IMR-90 (cell line): ENCODE measurements at regions of chr6 and their contacts with region 1.

Region 1: DNA sequence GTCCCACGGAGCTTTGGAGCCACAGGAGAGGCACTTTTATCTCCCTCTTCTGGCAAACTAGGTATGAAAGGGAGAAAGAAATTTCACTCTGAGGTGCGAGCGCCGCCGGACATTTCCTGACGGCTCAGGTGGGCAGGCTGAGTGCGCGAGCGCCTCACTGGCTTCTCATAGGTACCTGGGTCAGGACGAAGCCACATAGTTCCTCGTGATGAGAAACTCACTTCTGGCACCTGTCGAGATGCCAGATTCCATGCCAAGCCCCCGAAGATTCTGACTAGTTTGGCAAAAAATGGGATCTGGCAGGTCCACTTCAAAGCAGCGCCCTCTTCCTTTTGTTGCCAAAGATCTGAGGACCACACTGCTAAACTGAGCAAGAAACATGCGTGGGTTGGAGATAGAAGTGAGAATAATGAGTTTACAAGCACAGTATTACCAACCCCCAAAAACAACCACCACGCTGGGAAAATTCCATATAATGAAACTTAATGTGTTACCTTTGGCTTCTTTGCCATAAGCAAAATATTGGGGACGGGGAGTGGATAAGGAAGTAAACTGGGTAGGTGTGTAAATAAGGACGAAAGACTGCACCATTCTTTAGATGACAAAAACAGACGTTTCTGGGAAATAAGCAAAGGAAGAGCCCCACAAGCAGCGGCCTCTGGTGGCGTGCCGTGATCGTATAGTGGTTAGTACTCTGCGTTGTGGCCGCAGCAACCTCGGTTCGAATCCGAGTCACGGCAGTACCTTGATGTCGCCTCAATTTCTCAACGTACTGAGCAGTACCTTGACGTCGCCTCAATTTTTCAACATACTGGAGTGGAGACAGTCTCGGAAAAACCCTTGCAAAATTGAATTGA is 89.8 kb upstream of the PRSS16 start:
- DNase-seq: peak; percentile 77
- ATAC-seq: peak; percentile 86
- H3K4me3 ChIP-seq: peak overlapping the region; percentile 49
- H3K27ac ChIP-seq: no peak overlapping the region
- H3K4me1 ChIP-seq: no peaks in the 10 kb centered on the region
- H3K27me3 ChIP-seq: no peaks in the 10 kb centered on the region
- CTCF ChIP-seq: peak; percentile 50
- POLR2A ChIP-seq: no peak
- RAD21 ChIP-seq: peak; percentile 38

Region 2: GRCh38 chr6:26607434-26608230 is 550.1 kb before region 1 on chr6:
- CTCF ChIA-PET with region 1: no interaction called
- POLR2A ChIA-PET with region 1: no interaction called
- dilution Hi-C with region 1: no loop called
- in situ Hi-C with region 1: no loop called
- intact Hi-C with region 1: loop called (anchors 2 kb)
- DNase-seq: peak; percentile 58
- ATAC-seq: peak; percentile 99
- H3K4me3 ChIP-seq: peak overlapping the region; percentile 44
- H3K27ac ChIP-seq: no peak overlapping the region
- H3K4me1 ChIP-seq: no peaks in the 10 kb centered on the region
- H3K27me3 ChIP-seq: peaks cover 17% of the 10 kb centered on the region
- CTCF ChIP-seq: peak; percentile 85
- POLR2A ChIP-seq: no peak
- RAD21 ChIP-seq: peak; percentile 83

Region 3: DNA sequence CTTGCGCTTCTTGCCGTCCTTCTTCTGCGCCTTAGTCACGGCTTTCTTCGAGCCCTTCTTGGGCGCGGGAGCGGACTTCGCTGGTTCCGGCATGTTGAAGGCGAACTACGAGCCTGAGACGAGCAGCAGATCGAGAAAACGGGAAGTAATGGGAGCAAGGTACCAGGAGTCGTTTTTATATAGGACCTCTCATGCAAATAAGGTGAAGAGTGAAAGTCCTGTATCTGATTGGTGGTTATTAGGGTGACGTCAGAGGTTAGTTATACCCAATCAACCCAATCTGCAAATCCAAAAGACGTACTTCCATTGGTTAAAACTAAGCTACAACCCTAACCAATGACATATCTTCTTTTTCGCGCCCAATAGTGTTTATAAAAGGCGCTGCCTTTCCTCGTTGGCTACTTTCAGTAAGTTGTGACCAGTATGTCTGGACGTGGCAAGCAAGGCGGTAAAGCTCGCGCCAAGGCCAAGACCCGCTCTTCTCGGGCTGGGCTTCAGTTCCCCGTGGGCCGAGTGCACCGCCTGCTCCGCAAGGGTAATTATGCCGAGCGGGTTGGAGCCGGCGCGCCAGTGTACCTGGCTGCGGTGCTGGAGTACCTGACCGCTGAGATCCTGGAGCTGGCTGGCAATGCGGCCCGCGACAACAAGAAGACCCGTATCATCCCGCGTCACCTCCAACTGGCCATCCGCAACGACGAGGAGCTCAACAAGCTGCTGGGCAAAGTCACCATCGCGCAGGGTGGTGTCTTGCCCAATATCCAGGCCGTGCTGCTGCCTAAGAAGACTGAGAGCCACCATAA is 10.8 kb before region 1 on chr6:
- CTCF ChIA-PET with region 1: interaction called, 3 read pairs
- POLR2A ChIA-PET with region 1: interaction called, 13 read pairs
- dilution Hi-C with region 1: no loop called
- in situ Hi-C with region 1: no loop called
- intact Hi-C with region 1: no loop called
- DNase-seq: peak; percentile 100
- ATAC-seq: peak; percentile 90
- H3K4me3 ChIP-seq: peak overlapping the region; percentile 85
- H3K27ac ChIP-seq: peak overlapping the region; percentile 96
- H3K4me1 ChIP-seq: peaks cover 2% of the 10 kb centered on the region; the same call in 1 of the 2 replicates
- H3K27me3 ChIP-seq: no peaks in the 10 kb centered on the region
- CTCF ChIP-seq: no peak
- POLR2A ChIP-seq: peak; percentile 95
- RAD21 ChIP-seq: no peak

Region 4: GRCh38 chr6:27237089-27237803 is 79.6 kb after region 1 on chr6:
- CTCF ChIA-PET with region 1: no interaction called
- POLR2A ChIA-PET with region 1: no interaction called
- dilution Hi-C with region 1: no loop called
- in situ Hi-C with region 1: no loop called
- intact Hi-C with region 1: loop called (anchors 2 kb)
- DNase-seq: peak; percentile 77
- ATAC-seq: peak; percentile 90
- H3K4me3 ChIP-seq: peak overlapping the region; percentile 60; the same call in 1 of the 2 replicates
- H3K27ac ChIP-seq: no peak overlapping the region
- H3K4me1 ChIP-seq: no peaks in the 10 kb centered on the region
- H3K27me3 ChIP-seq: no peaks in the 10 kb centered on the region
- CTCF ChIP-seq: no peak
- POLR2A ChIP-seq: no peak
- RAD21 ChIP-seq: no peak

Region 5: DNA sequence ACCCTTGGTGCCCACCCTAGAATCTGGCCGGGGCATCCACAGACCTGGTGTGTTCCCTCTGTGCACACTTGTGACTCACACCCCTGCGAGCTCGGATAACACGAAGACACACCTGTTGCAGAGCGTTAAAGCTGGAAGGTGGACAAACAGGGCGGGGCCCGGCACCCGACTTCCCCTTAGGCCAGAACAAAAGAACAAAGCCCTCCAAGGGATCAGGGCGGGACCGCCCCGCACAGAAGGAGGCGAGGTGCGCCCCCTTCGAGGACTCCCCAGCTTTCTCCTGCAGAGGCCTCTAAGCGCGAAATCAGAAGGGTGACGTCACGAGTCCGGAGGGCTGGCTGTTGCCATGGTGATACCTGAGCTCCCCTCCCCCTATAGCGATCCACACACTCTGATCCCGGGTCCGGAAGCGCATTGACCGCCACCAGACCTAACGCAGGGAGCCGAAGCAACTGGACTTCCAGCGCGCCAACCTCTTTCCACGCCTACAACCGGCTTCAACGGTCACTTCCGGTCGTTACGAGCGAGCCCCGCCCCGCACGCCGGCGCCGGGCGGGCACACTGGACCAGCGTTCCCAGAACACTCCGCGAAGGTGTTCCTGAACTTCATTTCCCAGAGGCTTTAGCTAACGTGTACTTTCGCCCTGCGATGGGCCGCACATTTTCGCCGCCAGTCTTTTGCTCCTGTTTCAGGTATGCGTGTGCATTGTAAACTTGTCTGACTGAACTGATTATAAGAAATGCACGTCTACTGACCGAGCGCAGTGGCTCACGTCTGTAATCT is 315.1 kb after region 1 on chr6 and contains the start of gene ZNF184:
- CTCF ChIA-PET with region 1: no interaction called
- POLR2A ChIA-PET with region 1: no interaction called
- dilution Hi-C with region 1: no loop called
- in situ Hi-C with region 1: loop called (anchors 10 kb)
- intact Hi-C with region 1: loop called (anchors 10 kb)
- DNase-seq: peak; percentile 98
- ATAC-seq: peak; percentile 96
- H3K4me3 ChIP-seq: peak within 1 kb of the TSS; percentile 60
- H3K27ac ChIP-seq: peak within 1 kb of the TSS; percentile 74
- H3K4me1 ChIP-seq: no peaks in the 10 kb centered on the region
- H3K27me3 ChIP-seq: no peaks in the 10 kb centered on the region
- CTCF ChIP-seq: no peak; the same call in 1 of the 2 replicates
- POLR2A ChIP-seq: peak; percentile 82
- RAD21 ChIP-seq: no peak
- total RNA-seq, gene ZNF184: 8.1 and 10.6 TPM in 2 replicates

Region 6: DNA sequence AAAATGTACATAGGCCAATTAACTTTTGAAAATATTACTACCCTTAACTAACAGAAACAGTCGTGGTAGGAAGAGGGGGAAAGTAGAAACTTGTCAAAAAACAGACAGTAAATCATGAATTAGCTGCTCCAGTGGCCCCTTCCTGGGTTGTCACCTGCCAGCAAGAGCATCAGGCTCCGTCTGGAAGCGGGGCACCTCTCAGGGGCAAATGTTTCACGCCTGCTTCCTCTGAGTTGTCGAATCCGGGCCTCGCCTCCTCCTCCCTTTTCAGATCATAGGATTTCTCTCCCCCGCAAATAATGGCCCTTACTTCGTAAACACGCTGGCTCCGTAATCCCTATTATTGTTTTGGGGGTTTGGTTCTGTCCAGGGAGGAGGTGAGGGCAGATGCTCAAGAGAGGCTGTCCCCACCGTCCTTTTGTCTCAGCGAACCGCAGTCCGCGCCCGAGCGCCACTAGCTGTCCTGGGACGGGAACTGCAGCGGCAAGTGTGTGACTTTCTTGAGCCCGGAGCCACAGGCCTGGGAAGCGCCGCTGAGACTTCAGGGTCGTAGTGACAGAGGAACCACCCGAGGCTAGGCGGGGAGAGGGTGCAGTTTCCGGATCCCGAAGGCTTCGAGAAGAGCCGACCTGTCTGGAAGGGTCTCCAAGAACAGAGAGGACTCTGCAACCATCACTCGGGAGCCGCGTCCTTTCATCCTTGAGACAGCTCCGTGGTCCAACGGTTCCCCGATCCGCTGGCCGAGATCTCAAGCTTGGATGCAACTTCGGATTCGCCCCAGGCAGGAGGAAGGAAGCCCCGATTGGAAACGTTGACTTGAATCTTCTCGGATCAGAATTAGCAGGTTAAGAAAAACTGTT is 529.7 kb after region 1 on chr6:
- CTCF ChIA-PET with region 1: interaction called, 3 read pairs
- POLR2A ChIA-PET with region 1: no interaction called
- dilution Hi-C with region 1: no loop called
- in situ Hi-C with region 1: no loop called
- intact Hi-C with region 1: loop called (anchors 1 kb)
- DNase-seq: peak; percentile 62
- ATAC-seq: peak; percentile 85
- H3K4me3 ChIP-seq: peak overlapping the region; percentile 55
- H3K27ac ChIP-seq: no peak overlapping the region
- H3K4me1 ChIP-seq: no peaks in the 10 kb centered on the region
- H3K27me3 ChIP-seq: no peaks in the 10 kb centered on the region
- CTCF ChIP-seq: peak; percentile 63
- POLR2A ChIP-seq: no peak
- RAD21 ChIP-seq: peak; percentile 54